OCI-LY7 (cell line): ENCODE measurements at regions of chr12 and their contacts with region 1.

Region 1: GRCh38 chr12:121404734-121405133 is 4.8 kb downstream of the RNF34 start:
- DNase-seq: peak; percentile 48
- H3K4me3 ChIP-seq: no peak overlapping the region
- H3K27ac ChIP-seq: no peak overlapping the region
- H3K4me1 ChIP-seq: peaks cover 16% of the 10 kb centered on the region
- CTCF ChIP-seq: no peak

Region 2: DNA sequence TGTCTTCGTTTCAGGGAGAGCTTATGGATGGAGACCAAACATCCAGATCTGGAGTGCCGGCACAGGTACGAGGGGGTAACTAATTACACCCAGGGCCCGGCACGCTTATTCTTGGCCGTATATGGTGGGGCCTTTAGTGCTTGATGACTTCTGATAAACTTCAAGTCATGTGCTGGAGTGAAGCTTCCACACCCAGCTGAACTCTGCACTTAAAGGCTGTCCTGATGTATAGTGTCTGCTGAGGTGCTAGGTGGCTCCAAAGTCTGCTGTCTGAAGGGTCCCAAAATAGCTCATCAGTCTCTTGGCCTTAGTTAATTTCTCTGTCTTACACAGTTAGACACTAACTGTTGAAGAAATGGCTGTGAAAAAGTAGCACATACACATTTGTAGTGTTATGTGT is 13.1 kb after region 1 on chr12:
- CTCF ChIA-PET with region 1: no interaction called
- POLR2A ChIA-PET with region 1: interaction called, 37 read pairs
- intact Hi-C with region 1: loop called (anchors 1 kb)
- DNase-seq: no peak
- H3K4me3 ChIP-seq: no peak overlapping the region
- H3K27ac ChIP-seq: no peak overlapping the region
- H3K4me1 ChIP-seq: no peaks in the 10 kb centered on the region
- CTCF ChIP-seq: no peak